Ascending aorta (tissue), 2 donors: ENCODE measurements at regions of chr19 and their contacts with region 1.

Region 1: DNA sequence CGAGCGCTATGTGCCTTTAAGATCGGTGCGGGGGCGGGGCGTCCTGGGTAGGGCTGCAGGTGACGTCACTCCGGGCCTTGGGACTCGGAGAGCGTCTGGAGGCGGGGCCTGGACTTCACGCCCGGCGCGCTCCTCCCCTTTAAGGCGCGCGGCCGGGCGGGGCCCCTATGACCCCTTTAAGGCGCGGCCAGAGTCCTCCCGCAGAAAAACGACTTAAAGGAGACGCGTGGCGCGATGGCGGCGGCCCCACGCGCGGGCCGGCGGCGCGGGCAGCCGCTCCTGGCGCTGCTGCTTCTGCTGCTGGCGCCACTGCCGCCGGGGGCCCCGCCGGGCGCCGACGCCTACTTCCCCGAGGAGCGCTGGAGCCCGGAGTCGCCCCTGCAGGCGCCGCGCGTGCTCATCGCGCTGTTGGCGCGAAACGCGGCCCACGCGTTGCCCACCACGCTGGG is at the start of gene COLGALT1:
- DNase-seq: peak; percentile 95 to 99
- H3K4me3 ChIP-seq: peak within 1 kb of the TSS; percentile 93 to 96
- H3K27ac ChIP-seq: peak within 1 kb of the TSS; percentile 57 to 60
- H3K4me1 ChIP-seq: peaks cover 0 to 9% of the 10 kb centered on the region in 2 donors
- H3K27me3 ChIP-seq: no peaks in the 10 kb centered on the region
- CTCF ChIP-seq: peak in 1 of 3 experiments; percentile 24
- total RNA-seq, gene COLGALT1: 95.4 TPM

Region 2: GRCh38 chr19:17511724-17512573 is 43.6 kb before region 1 on chr19:
- intact Hi-C with region 1: loop called (anchors 1 kb)
- DNase-seq: peak; percentile 43 to 91
- H3K4me3 ChIP-seq: peak overlapping the region; percentile 85 to 97
- H3K27ac ChIP-seq: peak overlapping the region; percentile 92 to 97
- H3K4me1 ChIP-seq: peaks cover 5 to 14% of the 10 kb centered on the region in 2 donors
- H3K27me3 ChIP-seq: no peaks in the 10 kb centered on the region
- CTCF ChIP-seq: peak in 2 of 3 experiments; percentile 15 to 20

Region 3: GRCh38 chr19:17687857-17688784 is 132.6 kb after region 1 on chr19 and contains the start of gene UNC13A:
- intact Hi-C with region 1: no loop called
- DNase-seq: no peak
- H3K4me3 ChIP-seq: peak within 1 kb of the TSS; percentile 42 to 55
- H3K27ac ChIP-seq: peak within 1 kb of the TSS; percentile 4 to 11
- H3K4me1 ChIP-seq: peaks cover 0 to 13% of the 10 kb centered on the region in 2 donors
- H3K27me3 ChIP-seq: peaks cover 3% of the 10 kb centered on the region
- CTCF ChIP-seq: no peak
- total RNA-seq, gene UNC13A: 2.2 TPM

Region 4: DNA sequence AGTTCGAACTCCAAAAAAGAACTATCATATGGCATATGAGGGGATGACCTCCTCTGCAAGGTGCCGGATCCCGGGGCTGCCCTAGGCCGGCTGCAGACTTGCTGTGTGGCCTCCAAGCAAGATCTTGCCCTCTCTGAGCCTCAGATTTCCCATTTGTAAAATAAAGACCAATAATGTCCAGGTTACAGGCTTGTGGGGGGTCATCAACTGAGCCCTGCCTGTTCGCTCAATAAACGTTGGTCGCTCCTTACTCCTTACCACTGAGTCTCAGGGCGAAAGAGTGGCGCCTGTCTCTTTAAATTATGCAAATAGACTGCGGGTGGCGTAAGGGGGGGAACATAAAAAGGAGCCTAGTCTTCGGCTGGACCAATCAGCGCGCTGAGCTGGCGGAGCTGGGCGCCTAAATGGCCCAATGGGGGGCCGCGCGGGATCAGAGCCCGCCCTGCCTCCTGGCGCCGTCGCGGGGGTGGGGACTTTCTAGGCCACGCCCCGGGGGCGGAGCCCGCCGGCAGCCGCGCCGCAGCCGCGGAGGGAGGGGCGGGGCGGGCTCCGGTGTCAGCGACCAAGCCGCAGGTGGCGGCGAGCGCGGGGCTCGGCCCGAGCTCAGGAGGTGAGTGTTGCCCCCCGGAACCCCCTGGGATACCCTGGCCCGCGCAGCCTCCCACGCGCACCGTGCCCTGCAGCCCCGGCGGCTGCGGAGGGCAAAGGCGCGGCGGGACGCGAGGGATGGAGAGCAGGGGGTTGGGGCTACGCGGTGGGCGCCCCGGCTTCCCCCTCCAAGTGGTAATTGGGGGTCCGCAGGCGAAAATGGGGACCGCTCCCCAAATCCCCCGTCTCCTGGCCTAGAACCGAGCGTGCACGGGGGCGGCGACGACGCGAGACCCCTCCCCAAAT is 191.9 kb after region 1 on chr19:
- intact Hi-C with region 1: loop called (anchors 5 kb)
- DNase-seq: peak; percentile 78 to 95
- H3K4me3 ChIP-seq: peak overlapping the region; percentile 44 to 64
- H3K27ac ChIP-seq: no peak overlapping the region
- H3K4me1 ChIP-seq: peaks cover 0 to 5% of the 10 kb centered on the region in 2 donors
- H3K27me3 ChIP-seq: no peaks in the 10 kb centered on the region
- CTCF ChIP-seq: no peak